ENCODE measurements at regions of chr9 and their contacts with region 1.

Region 1: DNA sequence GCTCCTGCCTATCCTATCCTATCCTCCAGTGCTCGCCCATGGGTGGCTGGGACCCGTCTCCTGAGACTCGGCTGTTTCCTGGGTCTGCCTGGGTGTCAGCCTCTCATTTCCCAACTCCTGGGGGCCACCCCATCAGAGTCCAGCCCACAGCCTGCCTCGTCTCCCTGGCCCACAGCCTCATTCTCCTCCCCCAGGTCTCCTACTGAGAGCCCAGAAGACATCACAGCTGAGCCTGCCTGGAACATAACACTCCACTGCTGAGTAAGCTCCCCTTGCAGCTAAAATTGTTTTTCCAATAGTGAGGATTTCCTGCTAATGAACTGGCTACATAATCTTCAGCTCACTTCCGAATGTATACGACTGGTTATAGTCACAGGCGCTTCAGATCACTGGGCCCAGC is 95.3 kb downstream of the TTLL11 start:
- DNase-seq: no peak
- ATAC-seq: peak in 4 of 8 donors; percentile 3 to 37 (median 20)
- H3K4me3 ChIP-seq: no peak overlapping the region
- H3K27ac ChIP-seq: no peak overlapping the region
- H3K4me1 ChIP-seq: peaks cover 4 to 33% (median 19%) of the 10 kb centered on the region in 9 donors
- H3K27me3 ChIP-seq: no peaks in the 10 kb centered on the region
- CTCF ChIP-seq: no peak

Region 2: DNA sequence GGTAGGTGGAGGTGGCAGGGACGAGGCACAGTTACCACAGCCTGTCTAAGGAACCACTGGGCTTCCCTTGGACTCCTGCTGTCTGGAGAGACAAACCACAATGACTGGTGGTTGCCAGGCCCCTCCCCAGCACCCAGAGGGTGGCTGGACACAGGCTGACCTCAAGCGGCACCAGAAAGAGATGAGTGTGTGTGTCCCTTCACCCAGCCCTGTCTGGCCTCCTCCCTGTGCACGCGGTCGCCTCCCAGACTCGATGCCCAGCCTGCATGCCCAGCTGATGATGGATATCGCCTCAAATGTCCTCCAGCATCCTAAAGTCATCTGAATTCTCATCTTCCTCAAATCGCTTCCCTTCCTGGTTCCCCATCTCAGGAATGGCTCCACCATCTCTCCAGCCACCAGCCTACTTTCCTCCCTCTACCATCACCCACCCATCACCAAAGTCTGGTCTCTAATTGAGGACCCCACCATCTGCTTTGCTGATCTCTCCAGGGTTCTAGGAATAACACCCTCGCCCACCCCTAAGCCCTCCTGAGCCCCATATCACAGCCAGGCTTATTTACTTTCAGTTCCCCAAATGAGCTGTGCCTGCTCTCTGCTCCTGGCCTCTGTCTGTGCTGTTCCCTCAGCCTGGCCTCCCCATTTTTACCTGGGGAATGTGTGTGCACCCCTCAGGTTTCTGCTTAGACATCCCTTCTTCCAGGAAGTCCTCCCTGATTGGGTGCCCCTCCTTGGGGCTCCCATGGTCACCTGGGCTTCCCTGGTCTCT is 445.6 kb before region 1 on chr9:
- intact Hi-C with region 1: loop called in 5 of 10 experiments (anchors 2 to 5 kb)
- DNase-seq: no peak
- ATAC-seq: no peak
- H3K4me3 ChIP-seq: no peak overlapping the region
- H3K27ac ChIP-seq: no peak overlapping the region
- H3K4me1 ChIP-seq: peaks cover 7 to 32% (median 21%) of the 10 kb centered on the region in 9 donors
- H3K27me3 ChIP-seq: peaks cover 0 to 5% (median 0%) of the 10 kb centered on the region in 7 donors
- CTCF ChIP-seq: no peak

Region 3: DNA sequence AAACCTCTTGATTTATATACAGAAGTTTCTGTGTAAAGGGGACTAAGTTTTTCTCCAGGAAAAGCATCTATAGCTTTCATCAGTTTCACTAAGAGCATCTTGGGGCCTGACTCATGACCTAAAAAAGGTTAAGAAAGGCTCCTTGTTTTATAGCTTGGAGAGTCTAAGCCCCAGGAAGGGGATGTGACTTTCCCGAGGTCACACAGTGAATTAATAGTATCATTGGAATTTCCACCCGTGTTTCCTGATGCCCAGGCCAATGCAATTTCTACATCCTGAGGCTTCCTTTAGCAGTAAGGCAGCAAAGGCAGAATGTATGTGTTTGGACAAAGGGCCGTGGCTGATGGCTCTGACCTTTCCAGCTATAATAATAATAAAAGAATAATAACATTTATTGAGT is 170.6 kb after region 1 on chr9:
- intact Hi-C with region 1: no loop called
- DNase-seq: no peak
- ATAC-seq: peak in 3 of 8 donors; percentile 42 to 60 (median 57)
- H3K4me3 ChIP-seq: no peak overlapping the region
- H3K27ac ChIP-seq: peak overlapping the region in 3 of 10 donors; percentile 1 to 58 (median 18)
- H3K4me1 ChIP-seq: peaks cover 0 to 7% (median 0%) of the 10 kb centered on the region in 9 donors
- H3K27me3 ChIP-seq: peaks cover 0 to 11% (median 3%) of the 10 kb centered on the region in 7 donors
- CTCF ChIP-seq: no peak

Measured in heart right ventricle (tissue), 16 donors.